ENCODE measurements at regions of chr11 and their contacts with region 1.

Region 1: DNA sequence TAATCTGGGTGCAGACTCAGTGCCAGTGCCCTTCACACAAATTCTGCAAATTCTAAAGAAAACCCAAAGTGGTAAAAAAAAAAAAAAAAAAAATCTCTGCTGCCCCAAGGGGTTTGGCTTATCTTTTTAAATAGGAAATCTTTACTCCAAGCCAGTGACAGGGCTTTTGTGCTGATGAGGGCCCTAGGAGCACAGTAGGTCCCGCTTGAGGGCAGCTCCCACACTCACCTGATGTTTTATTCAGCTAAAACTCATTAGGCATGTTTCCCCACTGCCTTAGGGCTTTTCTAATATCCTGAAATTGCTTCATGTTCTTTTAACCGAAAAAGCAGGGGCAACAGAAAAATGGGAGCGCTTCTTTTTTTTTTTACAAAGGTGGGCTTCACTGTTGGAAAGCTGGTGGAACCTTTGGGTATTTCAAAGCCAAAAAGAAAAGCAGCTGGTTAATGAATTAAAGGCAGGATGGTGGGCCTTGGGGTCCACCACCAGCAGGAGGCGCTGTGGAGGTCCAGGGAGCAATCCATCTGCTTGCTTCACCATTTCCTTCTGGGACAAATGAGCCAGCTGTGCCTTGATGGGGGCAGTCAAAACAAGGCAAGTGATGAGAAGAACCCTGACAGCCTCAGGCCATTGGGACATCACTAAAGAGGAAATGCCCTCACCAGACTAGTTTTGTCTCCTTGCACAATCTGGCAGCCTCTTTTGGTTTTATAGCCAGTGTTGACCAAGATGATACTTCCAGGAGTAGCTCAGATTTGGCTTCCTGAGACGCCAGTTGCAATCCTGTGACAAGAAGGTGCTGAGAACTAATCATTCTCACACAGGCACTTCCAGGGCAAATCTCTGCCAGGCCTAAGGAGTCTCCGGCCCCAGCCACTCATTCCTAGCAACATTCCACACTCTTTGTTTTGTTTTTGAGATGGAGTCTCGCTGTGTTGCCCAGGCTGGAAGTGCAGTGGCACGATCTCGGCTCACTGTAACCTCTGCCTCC is 38.4 kb upstream of the WEE1 start:
- DNase-seq: peak; percentile 87
- H3K4me3 Mint-ChIP-seq: no peak overlapping the region
- H3K27ac Mint-ChIP-seq: no peak overlapping the region
- H3K4me1 Mint-ChIP-seq: no peaks in the 10 kb centered on the region
- H3K27me3 Mint-ChIP-seq: no peaks in the 10 kb centered on the region

Region 2: DNA sequence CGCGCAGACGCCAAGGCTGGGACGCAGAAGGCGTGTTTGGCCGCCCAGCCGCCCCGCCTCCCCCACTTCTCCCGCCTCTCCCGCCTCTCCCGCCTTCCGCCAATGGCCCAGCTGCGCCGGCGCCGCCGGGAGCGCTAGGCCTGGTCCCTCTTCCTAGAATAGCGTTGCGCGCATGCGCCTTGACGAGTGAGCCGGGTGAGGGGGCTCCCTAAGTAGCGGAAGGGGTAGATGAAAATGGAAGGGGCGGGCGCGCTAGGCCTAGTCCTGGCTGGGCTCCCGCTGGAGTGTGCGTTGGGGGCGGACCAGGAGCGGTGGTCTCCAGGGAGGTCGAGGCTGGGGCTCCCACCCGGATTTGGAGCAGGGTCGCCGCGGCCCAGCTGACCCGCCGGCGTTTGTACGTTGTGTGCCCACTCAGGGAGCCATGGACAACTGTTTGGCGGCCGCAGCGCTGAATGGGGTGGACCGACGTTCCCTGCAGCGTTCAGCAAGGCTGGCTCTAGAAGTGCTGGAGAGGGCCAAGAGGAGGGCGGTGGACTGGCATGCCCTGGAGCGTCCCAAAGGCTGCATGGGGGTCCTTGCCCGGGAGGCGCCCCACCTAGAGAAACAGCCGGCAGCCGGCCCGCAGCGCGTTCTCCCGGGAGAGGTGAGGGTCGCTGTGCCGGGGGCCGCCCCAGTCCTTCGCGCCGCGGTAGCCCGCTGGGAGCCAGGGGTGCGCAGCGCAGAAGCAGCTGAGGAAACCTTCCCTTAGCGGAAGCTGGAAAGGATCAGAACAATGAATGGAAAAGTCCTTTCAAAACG is 623.9 kb before region 1 on chr11 and contains the start of gene AKIP1:
- CTCF ChIA-PET with region 1: no interaction called
- intact Hi-C with region 1: no loop called
- DNase-seq: peak; percentile 91
- H3K4me3 Mint-ChIP-seq: peak within 1 kb of the TSS; percentile 92
- H3K27ac Mint-ChIP-seq: peak within 1 kb of the TSS; percentile 86
- H3K4me1 Mint-ChIP-seq: peaks cover 44% of the 10 kb centered on the region
- H3K27me3 Mint-ChIP-seq: no peaks in the 10 kb centered on the region
- total RNA-seq, gene AKIP1: 41.5 to 43.9 TPM

Region 3: DNA sequence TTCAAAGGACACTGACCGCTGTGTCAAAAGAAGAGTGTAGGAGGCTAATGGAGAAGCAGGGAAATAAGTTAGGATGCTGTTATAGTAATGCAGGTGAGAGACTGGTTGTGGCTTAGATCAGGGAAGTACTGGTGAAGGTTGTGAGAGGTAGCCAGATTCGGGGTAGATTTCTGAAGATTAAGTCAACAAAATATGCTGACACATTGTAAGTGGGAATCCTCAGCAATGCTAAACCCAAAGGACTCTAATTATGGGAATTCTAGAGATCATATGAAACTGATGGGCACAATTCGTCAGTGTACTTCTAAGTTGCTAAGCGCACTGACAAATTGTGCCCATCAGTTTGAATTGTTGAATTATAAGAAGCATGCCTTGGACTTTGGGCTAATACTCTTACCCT is 64.3 kb before region 1 on chr11:
- CTCF ChIA-PET with region 1: no interaction called
- intact Hi-C with region 1: no loop called
- DNase-seq: no peak
- H3K4me3 Mint-ChIP-seq: no peak overlapping the region
- H3K27ac Mint-ChIP-seq: no peak overlapping the region
- H3K4me1 Mint-ChIP-seq: peaks cover 5% of the 10 kb centered on the region
- H3K27me3 Mint-ChIP-seq: no peaks in the 10 kb centered on the region

Region 4: DNA sequence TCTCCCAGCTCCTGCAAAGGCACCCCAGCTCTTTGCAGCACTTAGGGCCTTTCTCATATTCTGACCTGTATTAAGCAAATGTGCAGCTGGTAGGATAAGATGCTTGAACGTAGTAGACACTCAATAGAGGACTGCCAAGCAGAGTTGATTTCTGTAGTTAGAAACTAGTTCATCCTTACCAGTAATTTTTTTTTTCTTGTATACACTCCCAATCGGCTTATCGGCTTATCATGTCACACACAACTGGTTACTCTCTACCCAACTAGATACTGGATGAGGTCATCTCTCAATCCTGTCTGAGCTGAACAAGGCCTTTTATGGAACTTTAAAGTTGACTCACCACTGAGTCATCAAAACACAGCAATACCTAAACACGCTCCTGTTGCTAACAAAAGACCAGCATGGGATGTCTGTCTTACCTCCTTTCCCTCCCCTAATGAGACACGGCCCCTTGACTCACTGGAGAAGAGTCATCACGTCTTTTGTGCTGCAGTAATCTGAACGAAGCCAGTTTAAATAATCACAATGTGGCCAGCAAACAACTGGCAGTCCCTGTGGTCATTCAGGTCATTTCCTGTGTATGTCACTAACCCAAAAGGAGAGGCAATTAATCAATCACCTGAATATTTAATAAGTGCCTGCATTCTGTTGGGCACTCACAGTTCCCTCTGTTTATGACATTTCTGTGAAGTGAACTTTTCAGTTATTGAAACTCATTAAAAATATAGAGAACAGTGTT is 30.9 kb after region 1 on chr11:
- CTCF ChIA-PET with region 1: interaction called, 10 read pairs
- intact Hi-C with region 1: no loop called
- DNase-seq: peak; percentile 81
- H3K4me3 Mint-ChIP-seq: no peak overlapping the region
- H3K27ac Mint-ChIP-seq: peak overlapping the region; percentile 65
- H3K4me1 Mint-ChIP-seq: peaks cover 9% of the 10 kb centered on the region
- H3K27me3 Mint-ChIP-seq: no peaks in the 10 kb centered on the region

Region 5: GRCh38 chr11:9601037-9601875 is 66.2 kb after region 1 on chr11:
- CTCF ChIA-PET with region 1: interaction called, 19 read pairs
- intact Hi-C with region 1: no loop called
- DNase-seq: peak; percentile 90
- H3K4me3 Mint-ChIP-seq: peak overlapping the region; percentile 67
- H3K27ac Mint-ChIP-seq: peak overlapping the region; percentile 84
- H3K4me1 Mint-ChIP-seq: peaks cover 27% of the 10 kb centered on the region
- H3K27me3 Mint-ChIP-seq: peaks cover 2% of the 10 kb centered on the region

Region 6: GRCh38 chr11:9748361-9748970 is 213.4 kb after region 1 on chr11:
- CTCF ChIA-PET with region 1: interaction called, 92 read pairs
- intact Hi-C with region 1: loop called (anchors 1 kb)
- DNase-seq: peak; percentile 77
- H3K4me3 Mint-ChIP-seq: no peak overlapping the region
- H3K27ac Mint-ChIP-seq: no peak overlapping the region
- H3K4me1 Mint-ChIP-seq: peaks cover 8% of the 10 kb centered on the region
- H3K27me3 Mint-ChIP-seq: no peaks in the 10 kb centered on the region

Region 7: GRCh38 chr11:9972989-9973388 is 437.9 kb after region 1 on chr11:
- CTCF ChIA-PET with region 1: interaction called, 5 read pairs
- intact Hi-C with region 1: loop called (anchors 10 kb)
- DNase-seq: peak; percentile 54
- H3K4me3 Mint-ChIP-seq: no peak overlapping the region
- H3K27ac Mint-ChIP-seq: no peak overlapping the region
- H3K4me1 Mint-ChIP-seq: no peaks in the 10 kb centered on the region
- H3K27me3 Mint-ChIP-seq: no peaks in the 10 kb centered on the region